MCF 10A (cell line): ENCODE measurements at regions of chrX and their contacts with region 1.

Region 1: DNA sequence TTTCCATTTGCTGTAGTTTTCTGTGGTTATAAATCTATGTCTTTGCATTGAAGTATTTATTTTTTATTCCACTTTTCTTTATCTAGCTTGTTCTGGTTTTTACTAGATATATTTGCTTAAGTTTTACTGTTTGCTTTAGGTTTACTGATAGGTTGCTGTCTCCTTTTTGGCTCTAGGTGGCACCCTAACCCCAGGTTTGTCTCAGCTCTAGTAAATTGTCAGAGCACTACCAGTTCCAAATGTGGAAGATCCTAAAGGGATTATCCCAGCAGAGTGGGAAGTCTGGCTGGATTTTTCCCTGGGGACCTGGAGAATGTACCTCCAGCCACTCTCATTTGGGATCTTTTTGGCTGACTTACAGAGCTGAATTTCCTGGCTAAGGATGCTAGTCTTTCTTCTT is 106.1 kb downstream of the PBDC1 start:
- DNase-seq: peak; percentile 60
- H3K4me3 Mint-ChIP-seq: no peak overlapping the region
- H3K27ac Mint-ChIP-seq: no peak overlapping the region
- H3K4me1 Mint-ChIP-seq: no peaks in the 10 kb centered on the region
- H3K27me3 Mint-ChIP-seq: no peaks in the 10 kb centered on the region
- CTCF ChIP-seq: peak; percentile 64

Region 2: DNA sequence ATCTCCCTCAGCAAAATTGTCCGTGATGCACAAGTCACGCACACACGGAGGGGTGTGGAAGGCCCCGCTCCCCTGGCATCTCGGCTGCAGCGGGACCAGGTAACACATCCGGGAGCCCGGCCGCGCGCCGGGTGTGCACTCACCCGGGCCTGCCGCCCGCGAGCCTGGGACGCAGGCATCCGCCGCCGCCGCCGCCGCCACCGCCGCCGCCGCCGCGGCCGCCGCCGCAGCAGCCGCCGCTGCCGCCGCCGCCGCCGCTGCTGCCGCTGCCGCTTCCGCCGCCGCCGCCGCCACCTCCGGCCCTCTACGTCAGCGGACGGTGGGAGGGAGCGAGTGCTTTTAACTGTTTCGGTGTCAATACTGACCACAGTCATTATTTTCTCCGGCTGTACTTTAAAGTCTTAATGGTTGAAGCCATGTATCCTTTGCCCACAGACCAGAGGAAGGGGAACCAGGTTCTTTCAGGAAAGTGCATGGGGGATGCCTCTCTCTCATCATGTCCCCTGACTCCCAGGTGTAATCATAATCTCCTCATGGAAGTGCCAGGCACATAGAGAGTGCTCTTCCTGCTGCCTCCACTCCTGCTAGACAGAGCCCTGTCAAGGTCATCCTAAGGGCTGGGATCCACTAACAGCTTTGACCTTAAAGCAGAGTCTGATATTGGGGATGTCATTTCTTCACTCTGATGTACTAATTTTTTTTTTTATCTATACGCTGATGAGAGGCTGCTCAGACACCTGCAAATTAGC is 531.9 kb before region 1 on chrX:
- CTCF ChIA-PET with region 1: no interaction called
- POLR2A ChIA-PET with region 1: no interaction called
- intact Hi-C with region 1: no loop called
- DNase-seq: peak; percentile 9
- H3K4me3 Mint-ChIP-seq: peak overlapping the region; percentile 73
- H3K27ac Mint-ChIP-seq: no peak overlapping the region
- H3K4me1 Mint-ChIP-seq: no peaks in the 10 kb centered on the region
- H3K27me3 Mint-ChIP-seq: peaks cover 17% of the 10 kb centered on the region
- CTCF ChIP-seq: no peak

Region 3: DNA sequence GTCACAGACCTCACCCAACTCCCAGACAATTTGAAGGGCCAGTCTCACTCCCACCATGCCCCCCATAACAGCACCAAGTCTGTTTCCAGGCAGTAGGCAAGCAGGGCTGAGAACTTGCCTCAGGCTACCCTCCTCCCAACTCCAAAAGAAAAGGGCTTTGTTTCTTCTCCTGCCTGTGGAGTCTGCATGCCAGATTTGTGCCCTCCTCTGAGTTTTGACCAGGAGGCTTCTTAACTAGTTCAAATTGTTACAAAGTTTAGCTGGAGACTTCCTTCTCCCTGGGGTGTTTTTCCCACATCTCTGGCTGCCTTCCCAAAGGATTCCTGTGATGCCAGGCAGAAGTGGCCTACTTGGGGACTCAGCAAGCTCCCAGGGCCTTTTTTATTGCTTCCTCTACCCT is 76.5 kb before region 1 on chrX:
- CTCF ChIA-PET with region 1: no interaction called
- POLR2A ChIA-PET with region 1: no interaction called
- intact Hi-C with region 1: no loop called
- DNase-seq: no peak
- H3K4me3 Mint-ChIP-seq: no peak overlapping the region
- H3K27ac Mint-ChIP-seq: no peak overlapping the region
- H3K4me1 Mint-ChIP-seq: no peaks in the 10 kb centered on the region
- H3K27me3 Mint-ChIP-seq: peaks cover 10% of the 10 kb centered on the region
- CTCF ChIP-seq: no peak

Region 4: GRCh38 chrX:76366972-76367371 is 88.0 kb after region 1 on chrX:
- CTCF ChIA-PET with region 1: no interaction called
- POLR2A ChIA-PET with region 1: no interaction called
- intact Hi-C with region 1: no loop called
- DNase-seq: no peak
- H3K4me3 Mint-ChIP-seq: no peak overlapping the region
- H3K27ac Mint-ChIP-seq: no peak overlapping the region
- H3K4me1 Mint-ChIP-seq: no peaks in the 10 kb centered on the region
- H3K27me3 Mint-ChIP-seq: no peaks in the 10 kb centered on the region
- CTCF ChIP-seq: no peak

Region 5: DNA sequence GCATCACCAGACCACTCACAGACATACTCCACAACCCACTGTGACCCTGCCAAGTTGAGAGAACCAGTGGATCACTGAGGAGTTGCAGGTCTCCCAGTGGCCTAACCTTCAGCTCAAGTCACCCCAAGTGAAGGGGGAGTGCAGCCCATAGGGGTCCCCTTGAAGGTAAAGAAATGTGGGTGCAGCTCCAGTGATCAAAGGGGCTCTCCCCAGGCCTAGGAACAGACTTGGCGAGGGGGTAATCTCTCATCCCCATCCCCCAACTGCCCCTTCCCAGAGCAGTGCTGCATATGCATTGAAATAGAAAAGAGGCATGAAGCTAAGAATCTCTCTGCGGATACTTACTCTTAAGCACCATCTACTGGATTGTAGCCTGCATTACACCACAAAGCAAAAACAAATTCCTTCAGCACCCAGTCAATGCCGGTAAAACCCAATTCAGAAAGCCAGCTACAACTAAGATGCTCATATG is 175.5 kb after region 1 on chrX:
- CTCF ChIA-PET with region 1: interaction called, 68 read pairs
- POLR2A ChIA-PET with region 1: interaction called, 5 read pairs
- intact Hi-C with region 1: loop called (anchors 1 kb)
- DNase-seq: peak; percentile 20
- H3K4me3 Mint-ChIP-seq: no peak overlapping the region
- H3K27ac Mint-ChIP-seq: no peak overlapping the region
- H3K4me1 Mint-ChIP-seq: no peaks in the 10 kb centered on the region
- H3K27me3 Mint-ChIP-seq: peaks cover 29% of the 10 kb centered on the region
- CTCF ChIP-seq: peak; percentile 36

Region 6: DNA sequence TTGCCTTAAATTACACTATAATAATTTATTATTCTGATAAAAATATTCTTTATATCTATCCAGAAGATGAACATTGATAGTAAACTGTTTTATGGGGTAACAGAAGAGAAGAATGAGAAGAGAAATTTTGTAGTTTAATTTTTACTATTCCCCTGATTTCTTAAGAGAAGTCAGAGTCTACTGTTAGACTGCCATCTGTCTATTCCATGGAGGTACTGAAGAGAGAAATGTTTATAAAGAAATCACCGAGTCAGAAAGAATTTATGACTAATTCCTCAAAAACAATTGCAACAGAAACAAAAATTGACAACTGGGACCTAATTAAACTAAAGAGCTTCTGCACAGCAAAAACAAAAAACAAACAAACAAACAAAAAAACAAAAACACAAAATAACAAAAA is 1318.1 kb after region 1 on chrX:
- CTCF ChIA-PET with region 1: no interaction called
- POLR2A ChIA-PET with region 1: no interaction called
- intact Hi-C with region 1: loop called (anchors 5 kb)
- DNase-seq: peak; percentile 30
- H3K4me3 Mint-ChIP-seq: no peak overlapping the region
- H3K27ac Mint-ChIP-seq: no peak overlapping the region
- H3K4me1 Mint-ChIP-seq: peaks cover 7% of the 10 kb centered on the region
- H3K27me3 Mint-ChIP-seq: no peaks in the 10 kb centered on the region
- CTCF ChIP-seq: peak; percentile 29

Region 7: DNA sequence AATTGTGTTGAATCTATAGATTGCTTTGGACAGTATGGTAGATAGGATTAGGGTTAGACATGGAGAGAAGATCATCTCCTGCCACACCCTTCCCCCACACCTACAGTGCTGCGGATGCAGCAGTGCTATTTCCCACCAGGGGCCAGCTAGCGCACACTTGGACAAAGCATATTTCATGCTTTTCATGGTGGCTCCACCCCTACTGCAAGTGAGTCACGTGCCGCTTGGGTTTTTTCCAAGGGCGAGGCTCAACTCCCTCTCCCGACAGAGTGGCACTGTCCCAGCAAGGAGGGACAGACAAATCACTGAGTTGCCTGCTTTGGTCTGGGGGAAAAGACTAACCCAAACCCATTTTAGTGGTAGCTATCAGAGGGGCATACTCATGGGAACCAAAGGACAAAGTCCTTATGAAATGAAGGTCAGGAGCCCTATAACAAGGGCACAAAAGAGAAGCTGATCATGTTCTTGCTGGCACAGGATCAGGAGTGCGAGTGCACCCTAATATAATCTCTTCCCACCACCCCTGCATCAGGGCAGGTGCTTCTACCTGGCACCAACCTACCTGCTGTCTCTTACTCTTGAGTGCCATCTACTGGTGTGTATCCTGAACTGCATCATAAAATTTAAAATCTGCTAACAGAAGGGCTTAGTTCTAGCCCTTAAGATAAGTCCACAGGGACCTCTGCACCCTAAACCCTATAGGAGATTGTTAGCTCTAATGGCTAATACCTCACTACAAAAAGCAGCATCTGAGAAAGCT is 1745.5 kb after region 1 on chrX:
- CTCF ChIA-PET with region 1: interaction called, 23 read pairs
- POLR2A ChIA-PET with region 1: no interaction called
- intact Hi-C with region 1: loop called (anchors 1 kb)
- DNase-seq: peak; percentile 49
- H3K4me3 Mint-ChIP-seq: no peak overlapping the region
- H3K27ac Mint-ChIP-seq: no peak overlapping the region
- H3K4me1 Mint-ChIP-seq: no peaks in the 10 kb centered on the region
- H3K27me3 Mint-ChIP-seq: no peaks in the 10 kb centered on the region
- CTCF ChIP-seq: peak; percentile 71